ENCODE measurements at regions of chr3 and their contacts with region 1.

Region 1: GRCh38 chr3:87949879-87950208 is 109.0 kb downstream of the CGGBP1 start:
- DNase-seq: no peak
- ATAC-seq: peak; percentile 73
- H3K4me3 Mint-ChIP-seq: peak overlapping the region; percentile 36
- H3K27ac Mint-ChIP-seq: peak overlapping the region; percentile 77
- H3K4me1 Mint-ChIP-seq: peaks cover 19% of the 10 kb centered on the region
- H3K27me3 Mint-ChIP-seq: no peaks in the 10 kb centered on the region
- CTCF ChIP-seq: no peak

Region 2: DNA sequence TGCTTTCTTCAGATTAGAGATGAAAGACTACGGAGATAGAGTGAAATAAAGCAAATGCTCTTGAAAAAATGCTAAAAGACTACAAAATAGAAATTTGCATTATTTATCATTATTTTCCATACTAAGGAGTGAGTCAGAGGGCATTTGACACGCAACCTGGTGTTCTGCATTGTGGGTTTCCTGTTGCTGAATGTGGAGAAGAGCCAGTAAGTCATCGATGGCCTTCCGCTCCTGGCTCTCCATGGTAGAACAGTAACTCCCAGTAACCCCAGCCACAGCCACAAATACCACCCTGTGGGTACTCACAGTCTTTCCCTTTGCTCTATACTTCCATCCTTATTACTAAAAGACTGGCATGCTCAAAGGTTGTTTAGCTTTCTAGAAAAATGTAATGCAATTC is 47.5 kb after region 1 on chr3:
- CTCF ChIA-PET with region 1: no interaction called
- POLR2A ChIA-PET with region 1: no interaction called
- intact Hi-C with region 1: loop called (anchors 2 kb)
- DNase-seq: no peak
- ATAC-seq: peak; percentile 77
- H3K4me3 Mint-ChIP-seq: peak overlapping the region; percentile 75
- H3K27ac Mint-ChIP-seq: peak overlapping the region; percentile 79
- H3K4me1 Mint-ChIP-seq: peaks cover 33% of the 10 kb centered on the region
- H3K27me3 Mint-ChIP-seq: no peaks in the 10 kb centered on the region
- CTCF ChIP-seq: no peak

Measured in activated B cell treated with CpG ODN at 0.5 μM for 24 hours (primary cell).